ENCODE measurements at regions of chr6 and their contacts with region 1.

Region 1: DNA sequence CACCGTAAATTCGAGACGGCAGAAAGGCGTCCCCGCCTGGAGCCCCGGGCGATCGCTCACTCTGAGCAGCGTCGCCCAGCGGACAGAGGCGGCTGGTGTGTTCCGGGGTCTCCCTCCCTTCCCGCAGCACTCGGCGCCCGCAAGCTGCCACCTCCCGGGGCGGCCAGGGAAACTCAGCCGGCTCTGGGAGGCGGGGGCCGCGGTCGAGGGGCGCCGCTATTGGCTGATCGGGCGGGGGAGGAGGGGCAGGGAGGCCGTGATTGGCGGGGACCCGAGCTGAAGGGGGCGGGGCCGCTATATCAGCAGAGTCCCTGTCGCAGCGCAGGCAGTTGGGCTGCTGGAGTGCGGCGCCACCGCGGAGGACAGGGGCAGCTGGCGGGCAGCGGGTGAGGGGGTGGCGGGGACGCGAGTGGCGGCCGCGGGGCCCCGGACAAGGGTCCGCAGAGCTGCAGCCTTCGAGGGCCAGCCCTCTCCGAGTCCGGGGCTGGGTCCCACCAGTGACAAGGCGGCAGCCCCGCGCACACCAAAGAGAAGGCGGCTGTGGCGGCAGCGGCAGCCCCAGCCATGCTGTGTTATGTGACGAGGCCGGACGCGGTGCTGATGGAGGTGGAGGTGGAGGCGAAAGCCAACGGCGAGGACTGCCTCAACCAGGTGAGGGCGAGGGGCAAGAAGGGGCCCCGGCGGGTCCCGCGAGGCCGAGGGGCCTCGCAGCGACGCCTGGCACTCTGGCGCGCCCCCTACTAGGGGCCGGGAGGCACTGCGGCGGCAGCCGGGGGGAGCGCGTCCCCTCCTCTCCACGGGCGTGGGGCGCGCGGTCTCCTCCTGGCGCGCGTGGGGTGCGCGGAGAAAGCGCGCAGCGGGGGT is at the start of gene MYLIP:
- DNase-seq: peak; percentile 98 to 100 (median 98)

Region 2: GRCh38 chr6:16168858-16169257 is 39.9 kb after region 1 on chr6:
- intact Hi-C with region 1: loop called (anchors 5 kb)
- DNase-seq: no peak

Region 3: DNA sequence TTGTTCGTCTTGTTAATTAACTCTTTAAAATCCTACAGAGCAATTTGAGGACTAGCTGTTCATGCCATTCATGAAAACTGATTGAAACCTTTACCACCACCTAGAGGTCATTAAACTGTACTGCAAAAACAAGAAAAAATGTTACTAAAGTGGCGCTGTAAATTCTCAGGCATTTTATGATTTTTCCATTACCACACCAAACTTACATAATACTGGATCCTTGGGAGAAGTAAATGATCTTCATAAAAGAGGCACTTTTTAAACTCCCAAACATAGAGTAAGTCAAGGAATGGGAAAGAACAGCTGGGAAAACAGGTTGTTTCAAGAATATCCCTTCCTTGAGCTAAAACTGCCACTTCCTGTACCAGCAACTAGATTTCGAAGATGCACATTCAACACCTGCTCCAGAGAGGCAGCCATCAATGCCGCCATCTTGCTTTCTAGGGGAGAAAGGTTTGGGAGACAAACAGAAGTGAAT is 54.2 kb after region 1 on chr6:
- intact Hi-C with region 1: loop called (anchors 1 kb)
- DNase-seq: no peak

Region 4: DNA sequence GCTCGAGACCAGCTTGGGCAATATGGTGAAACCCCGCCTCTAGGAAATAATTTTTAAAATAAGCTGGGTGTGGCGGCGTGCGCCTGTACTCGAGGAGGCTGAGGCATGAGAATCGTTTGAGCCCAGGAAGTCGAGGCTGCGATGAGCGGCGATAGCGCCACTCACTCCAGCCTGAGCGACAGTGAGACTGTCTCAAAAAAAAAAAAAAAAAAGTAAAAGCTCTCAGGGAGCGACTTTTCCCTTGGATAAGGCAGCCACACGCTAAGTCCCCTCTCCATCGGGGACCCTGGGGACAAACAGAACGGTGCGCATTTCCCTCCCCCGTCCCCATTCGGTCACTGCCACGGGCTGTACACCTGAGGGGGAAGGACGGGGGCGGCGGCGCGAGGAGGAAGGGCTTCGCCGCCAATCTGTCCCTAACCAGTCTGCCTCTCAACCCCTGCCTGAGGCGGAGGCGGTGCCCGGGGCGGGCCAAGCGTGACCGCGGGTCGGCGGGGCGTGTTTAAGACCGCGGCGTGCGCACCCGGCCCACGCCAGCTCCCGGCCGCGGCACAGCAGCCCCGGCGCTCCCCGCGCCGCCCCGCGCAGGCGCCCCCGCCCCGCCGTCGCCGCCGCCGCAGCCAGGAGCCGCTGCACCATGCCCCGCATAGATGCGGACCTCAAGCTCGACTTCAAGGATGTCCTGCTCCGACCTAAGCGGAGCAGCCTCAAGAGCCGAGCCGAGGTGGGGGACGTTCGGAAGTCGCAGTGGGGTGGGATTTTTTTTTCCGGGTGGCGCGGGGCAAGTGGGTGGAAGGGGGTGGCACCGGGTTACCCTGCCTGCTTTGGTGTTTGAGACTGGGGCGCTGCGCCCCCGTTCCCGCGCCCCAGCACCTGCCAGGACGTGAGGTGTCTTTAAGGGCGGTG is 109.3 kb after region 1 on chr6 and contains the start of gene GMPR:
- intact Hi-C with region 1: no loop called
- DNase-seq: peak; percentile 32 to 92 (median 55)